Activated naive CD4-positive, alpha-beta T cell treated with anti-CD3 and anti-CD28 coated beads for 36 hours (primary cell): ENCODE measurements at regions of chr17 and their contacts with region 1.

Region 1: GRCh38 chr17:51120739-51121617 is at the start of gene SPAG9:
- DNase-seq: peak; percentile 92
- H3K4me3 Mint-ChIP-seq: peak within 1 kb of the TSS; percentile 98
- H3K27ac Mint-ChIP-seq: peak within 1 kb of the TSS; percentile 99
- H3K4me1 Mint-ChIP-seq: peaks cover 49% of the 10 kb centered on the region
- H3K27me3 Mint-ChIP-seq: no peaks in the 10 kb centered on the region
- total RNA-seq, gene SPAG9: 39.8 to 43.2 TPM

Region 2: DNA sequence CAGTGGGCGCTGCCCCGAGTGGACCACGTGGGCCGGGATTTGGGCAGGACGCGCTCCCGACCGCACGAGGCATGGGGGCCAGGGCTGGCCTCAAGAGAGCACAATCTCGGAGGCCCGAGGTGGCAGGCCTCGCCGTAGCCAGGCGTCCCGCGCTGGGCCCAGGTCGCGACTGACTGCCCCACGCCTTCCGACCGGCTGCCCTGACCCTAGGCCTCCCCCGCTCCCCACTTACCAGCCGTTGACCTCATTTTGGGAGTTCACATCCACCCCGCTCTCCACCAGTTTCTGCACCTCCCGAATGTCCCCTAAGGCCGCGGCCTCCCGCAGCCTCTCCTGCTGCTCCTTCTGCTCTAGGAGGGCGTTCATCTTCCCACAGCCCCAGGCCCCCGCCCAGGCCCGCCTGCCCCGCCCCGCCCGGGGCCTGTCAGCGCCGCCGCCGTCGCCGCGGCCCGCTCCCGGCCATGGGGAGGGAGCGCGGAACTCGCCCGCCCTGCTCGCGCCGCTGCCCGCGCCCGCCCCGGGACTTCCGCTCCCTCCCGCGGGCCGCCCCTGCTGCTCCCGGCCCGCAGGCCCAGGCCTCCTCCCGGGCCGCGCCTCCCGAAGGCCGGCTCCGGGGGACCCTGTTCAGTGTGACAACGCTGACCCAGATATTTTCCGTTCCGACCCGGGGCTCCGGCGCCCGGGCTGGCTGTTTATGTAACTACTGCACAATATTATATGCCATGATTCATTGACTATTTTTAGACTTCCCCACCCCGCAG is 413.5 kb before region 1 on chr17 and contains the start of gene ANKRD40:
- CTCF ChIA-PET with region 1: no interaction called
- intact Hi-C with region 1: loop called (anchors 2 kb)
- DNase-seq: peak; percentile 94
- H3K4me3 Mint-ChIP-seq: peak within 1 kb of the TSS; percentile 95
- H3K27ac Mint-ChIP-seq: peak within 1 kb of the TSS; percentile 92
- H3K4me1 Mint-ChIP-seq: peaks cover 44% of the 10 kb centered on the region
- H3K27me3 Mint-ChIP-seq: no peaks in the 10 kb centered on the region
- total RNA-seq, gene ANKRD40: 25.7 to 26.5 TPM

Region 3: DNA sequence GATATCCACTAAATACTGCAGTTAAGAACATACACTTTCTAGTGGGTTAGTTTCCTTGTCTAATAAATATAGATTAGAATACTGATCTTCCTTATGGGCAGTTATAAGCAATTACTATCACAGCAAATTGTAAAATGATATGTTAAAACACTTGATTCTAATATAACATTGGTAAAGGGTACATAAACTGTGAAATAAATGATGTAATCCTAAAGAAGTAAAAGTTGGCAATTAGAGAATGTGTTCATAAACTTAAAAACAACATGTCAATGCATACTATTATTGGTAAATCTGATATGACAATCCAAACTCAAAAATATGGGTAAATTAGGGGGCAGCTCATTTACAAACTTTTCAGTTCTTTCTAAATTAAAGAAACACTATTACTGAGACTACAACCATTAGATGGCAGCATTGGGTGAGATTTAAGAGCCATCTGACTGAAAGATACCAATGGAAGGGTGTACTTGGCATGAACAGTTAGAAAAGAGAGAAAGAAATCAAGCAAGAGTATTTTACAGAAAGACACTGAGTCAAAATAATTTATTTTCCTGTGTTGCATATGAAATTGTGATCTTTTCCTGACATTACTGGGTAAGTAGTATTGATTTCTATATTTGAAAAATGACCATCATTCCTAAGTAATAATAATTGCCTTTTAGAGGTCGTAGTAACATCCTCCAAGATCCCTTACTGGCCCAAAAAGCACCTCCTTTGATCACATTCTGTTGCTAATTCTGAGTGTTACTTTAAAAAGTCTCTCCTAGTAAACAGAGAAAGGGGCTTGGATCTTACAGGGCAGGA is 119.9 kb before region 1 on chr17:
- CTCF ChIA-PET with region 1: interaction called, 5 read pairs
- intact Hi-C with region 1: loop called (anchors 1 kb)
- DNase-seq: peak; percentile 18
- H3K4me3 Mint-ChIP-seq: no peak overlapping the region
- H3K27ac Mint-ChIP-seq: no peak overlapping the region
- H3K4me1 Mint-ChIP-seq: no peaks in the 10 kb centered on the region
- H3K27me3 Mint-ChIP-seq: no peaks in the 10 kb centered on the region

Region 4: DNA sequence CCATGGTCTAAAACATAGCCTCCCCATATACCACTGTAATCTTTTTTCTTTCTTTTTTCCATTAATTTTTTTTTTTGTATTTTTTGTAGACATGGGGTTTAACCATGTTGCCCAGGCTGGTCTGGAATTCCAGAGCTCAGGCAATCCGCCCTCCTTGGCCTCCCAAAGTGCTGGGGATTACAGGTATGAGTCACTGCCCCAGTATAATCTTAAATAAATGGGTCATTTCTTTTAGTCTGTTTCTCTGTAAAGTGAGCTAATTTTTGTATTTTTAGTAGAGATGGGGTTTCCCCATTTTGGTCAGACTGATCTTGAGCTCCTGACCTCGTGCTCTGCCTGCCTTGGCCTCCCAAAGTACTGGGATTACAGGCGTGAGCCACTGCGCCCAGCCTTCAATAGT is 26.7 kb after region 1 on chr17:
- CTCF ChIA-PET with region 1: interaction called, 12 read pairs
- intact Hi-C with region 1: loop called (anchors 1 kb)
- DNase-seq: no peak
- H3K4me3 Mint-ChIP-seq: no peak overlapping the region
- H3K27ac Mint-ChIP-seq: no peak overlapping the region
- H3K4me1 Mint-ChIP-seq: peaks cover 14% of the 10 kb centered on the region
- H3K27me3 Mint-ChIP-seq: no peaks in the 10 kb centered on the region

Region 5: DNA sequence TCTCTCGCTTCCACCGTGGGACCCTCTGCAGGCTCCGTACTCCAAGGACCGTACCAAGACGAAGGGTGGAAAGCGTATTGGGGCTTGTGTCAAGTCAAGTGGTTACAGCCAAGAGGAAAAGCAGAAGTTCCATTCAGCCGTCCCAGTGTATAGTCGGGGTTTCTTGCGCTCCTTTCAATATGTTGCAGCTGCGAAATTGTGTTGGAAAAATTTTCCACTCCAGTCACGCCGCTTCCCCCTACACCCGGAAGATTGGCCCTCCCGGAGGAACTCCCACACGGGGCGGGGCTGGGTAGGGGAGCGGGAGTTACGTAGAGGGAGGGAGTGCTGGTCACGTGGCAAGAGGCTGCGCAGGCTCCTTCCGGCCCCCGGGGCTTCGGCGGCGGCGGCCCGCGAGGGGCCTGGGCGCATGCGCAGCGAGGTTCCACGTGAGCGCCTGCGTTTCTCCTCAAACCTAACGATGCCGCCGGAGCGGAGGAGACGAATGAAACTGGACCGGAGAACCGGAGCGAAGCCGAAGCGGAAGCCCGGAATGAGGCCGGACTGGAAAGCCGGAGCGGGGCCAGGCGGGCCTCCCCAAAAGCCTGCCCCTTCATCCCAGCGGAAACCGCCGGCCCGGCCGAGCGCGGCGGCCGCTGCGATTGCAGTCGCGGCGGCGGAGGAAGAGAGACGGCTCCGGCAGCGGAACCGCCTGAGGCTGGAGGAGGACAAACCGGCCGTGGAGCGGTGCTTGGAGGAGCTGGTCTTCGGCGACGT is 139.3 kb after region 1 on chr17 and contains the start of gene UTP18:
- CTCF ChIA-PET with region 1: no interaction called
- intact Hi-C with region 1: loop called (anchors 1 kb)
- DNase-seq: peak; percentile 96
- H3K4me3 Mint-ChIP-seq: peak within 1 kb of the TSS; percentile 88
- H3K27ac Mint-ChIP-seq: peak within 1 kb of the TSS; percentile 98
- H3K4me1 Mint-ChIP-seq: peaks cover 66% of the 10 kb centered on the region
- H3K27me3 Mint-ChIP-seq: no peaks in the 10 kb centered on the region
- total RNA-seq, gene UTP18: 54.4 to 54.5 TPM